Astrocyte of the cerebellum (primary cell): ENCODE measurements at regions of chr1 and their contacts with region 1.

Region 1: GRCh38 chr1:201229771-201230635 is 39.4 kb downstream of the IGFN1 start:
- DNase-seq: no peak
- H3K4me3 ChIP-seq: no peak overlapping the region
- CTCF ChIP-seq: peak; percentile 17

Region 2: DNA sequence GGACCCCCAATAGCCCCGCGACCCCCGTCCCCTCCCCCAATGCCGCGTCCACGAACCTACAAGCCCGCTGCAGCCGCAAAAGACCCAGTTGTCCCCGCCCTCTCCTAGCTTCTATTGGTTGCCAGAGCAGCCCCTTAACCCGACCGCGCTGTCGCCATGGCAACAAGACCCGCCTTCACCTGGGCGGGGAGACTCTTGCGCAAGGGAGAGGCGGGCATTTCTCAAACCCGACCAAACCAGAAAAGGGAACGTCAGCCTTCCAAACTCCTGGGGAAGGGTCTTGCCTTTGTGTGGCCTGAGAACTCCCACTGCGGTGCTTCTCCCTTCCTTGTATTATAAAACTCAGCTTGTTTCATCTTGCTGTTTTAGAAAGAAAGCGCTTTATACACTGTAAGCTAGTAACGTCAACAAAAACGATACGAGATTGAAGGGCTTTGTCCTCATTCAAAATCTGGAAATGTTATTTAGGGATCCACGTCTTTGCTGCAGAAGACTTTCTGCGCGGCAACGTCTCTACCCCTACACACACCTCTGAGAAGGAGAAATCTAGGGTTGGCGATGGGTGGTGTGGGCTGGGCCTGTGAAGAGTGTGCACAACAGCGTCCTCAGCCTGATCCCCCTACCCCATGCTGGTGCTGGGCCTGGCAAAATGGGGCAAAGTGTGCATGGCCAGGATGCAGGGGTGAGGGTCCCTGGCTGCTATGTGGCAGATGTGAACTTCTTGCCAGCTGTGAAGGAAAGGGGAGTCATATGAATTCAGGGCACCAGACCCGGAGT is 75.4 kb before region 1 on chr1 and contains the start of gene TMEM9:
- in situ Hi-C with region 1: loop called (anchors 10 kb)
- DNase-seq: peak; percentile 86
- H3K4me3 ChIP-seq: peak within 1 kb of the TSS; percentile 75
- CTCF ChIP-seq: no peak

Region 3: DNA sequence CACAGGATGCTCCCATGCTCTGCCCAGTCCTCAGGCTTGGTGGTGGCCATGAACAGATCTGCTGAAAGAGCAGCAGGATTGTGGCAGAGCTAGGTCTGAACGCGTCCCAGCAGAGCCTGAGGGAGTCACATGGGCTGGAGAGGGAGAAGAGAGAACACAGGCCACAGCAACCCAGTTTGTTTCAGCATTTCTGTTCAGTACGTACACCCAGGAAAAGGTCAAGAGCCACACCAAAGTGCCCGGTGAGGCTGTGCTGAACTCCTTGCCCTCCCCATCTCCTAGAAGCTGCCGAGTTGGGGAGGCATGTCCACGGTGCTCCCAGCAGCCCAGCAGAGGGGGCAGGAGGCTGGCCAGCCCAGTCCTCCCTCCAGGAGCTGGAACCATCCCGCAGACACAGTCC is 58.8 kb after region 1 on chr1:
- in situ Hi-C with region 1: no loop called
- DNase-seq: no peak
- H3K4me3 ChIP-seq: no peak overlapping the region
- CTCF ChIP-seq: no peak

Region 4: DNA sequence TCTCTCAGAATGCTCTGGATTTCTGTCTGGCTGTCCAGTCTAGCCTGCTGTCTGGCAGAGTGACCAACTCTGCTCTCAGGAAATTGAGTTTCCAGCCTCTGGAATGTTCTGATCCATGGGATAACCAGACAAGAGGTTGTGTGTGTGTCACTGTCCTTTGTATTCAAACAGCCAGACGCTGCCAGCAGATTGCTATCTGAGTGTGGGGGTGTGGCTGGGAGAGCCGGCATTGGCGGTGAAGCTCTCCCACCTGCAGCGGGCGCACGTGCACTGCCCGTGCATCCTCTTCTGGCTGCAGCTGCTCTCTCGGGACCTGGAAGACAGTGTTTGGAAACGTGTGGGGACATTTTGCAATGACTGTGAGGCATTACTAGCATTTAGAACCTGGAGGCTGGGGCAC is 79.4 kb after region 1 on chr1:
- in situ Hi-C with region 1: loop called (anchors 10 kb)
- DNase-seq: no peak
- H3K4me3 ChIP-seq: no peak overlapping the region
- CTCF ChIP-seq: peak; percentile 4